HCT116 (cell line): ENCODE measurements at regions of chr22 and their contacts with region 1.

Region 1: DNA sequence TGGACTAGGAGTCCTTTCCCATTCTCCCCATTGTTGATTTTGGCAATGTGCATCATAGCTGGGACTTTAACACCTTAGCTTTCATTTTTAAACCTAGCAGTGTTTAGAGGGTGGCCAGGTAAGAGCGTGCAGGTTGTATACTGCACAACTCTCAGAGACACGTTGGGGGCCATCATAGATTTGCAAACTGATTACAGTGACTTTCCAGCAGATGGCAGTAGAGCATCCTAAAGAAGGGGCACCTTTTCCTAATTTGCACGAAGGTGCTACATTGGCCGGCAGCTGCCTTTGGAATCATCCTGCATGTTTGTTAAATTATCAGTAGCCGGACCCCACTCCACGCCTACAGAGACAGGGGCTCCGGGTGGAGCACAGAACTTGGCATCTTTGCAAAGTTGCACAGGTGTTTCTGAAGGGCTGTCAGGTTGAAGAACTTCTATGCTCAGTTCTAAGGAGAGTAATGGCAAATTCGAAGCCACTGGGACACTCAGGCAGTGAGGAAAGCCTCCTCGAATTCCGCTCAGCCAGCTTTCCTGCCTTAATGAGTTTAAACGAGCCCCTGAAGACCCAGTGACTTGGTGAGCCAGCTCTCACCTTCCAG is 7.7 kb downstream of the LHFPL7 start:
- DNase-seq: no peak
- ATAC-seq: peak; percentile 87
- H3K4me3 ChIP-seq: no peak overlapping the region
- H3K27ac ChIP-seq: no peak overlapping the region
- H3K4me1 ChIP-seq: no peaks in the 10 kb centered on the region; a peak in 1 of 4 replicates
- H3K27me3 ChIP-seq: no peaks in the 10 kb centered on the region
- CTCF ChIP-seq: peak; percentile 65 to 78 (median 76); a peak in 5 of 6 replicates
- POLR2A ChIP-seq: no peak
- RAD21 ChIP-seq: peak; percentile 80

Region 2: GRCh38 chr22:24926849-24927579 is 11.8 kb before region 1 on chr22:
- CTCF ChIA-PET with region 1: interaction called, 11 read pairs
- POLR2A ChIA-PET with region 1: no interaction called
- RAD21 ChIA-PET with region 1: interaction called in 1 of 2 experiments, 3 read pairs
- intact Hi-C with region 1: no loop called
- DNase-seq: no peak
- ATAC-seq: peak; percentile 78
- H3K4me3 ChIP-seq: no peak overlapping the region
- H3K27ac ChIP-seq: no peak overlapping the region
- H3K4me1 ChIP-seq: peaks cover 7 to 11% of the 10 kb centered on the region in 2 experiments
- H3K27me3 ChIP-seq: peaks cover 17% of the 10 kb centered on the region
- CTCF ChIP-seq: no peak
- POLR2A ChIP-seq: no peak
- RAD21 ChIP-seq: no peak

Region 3: DNA sequence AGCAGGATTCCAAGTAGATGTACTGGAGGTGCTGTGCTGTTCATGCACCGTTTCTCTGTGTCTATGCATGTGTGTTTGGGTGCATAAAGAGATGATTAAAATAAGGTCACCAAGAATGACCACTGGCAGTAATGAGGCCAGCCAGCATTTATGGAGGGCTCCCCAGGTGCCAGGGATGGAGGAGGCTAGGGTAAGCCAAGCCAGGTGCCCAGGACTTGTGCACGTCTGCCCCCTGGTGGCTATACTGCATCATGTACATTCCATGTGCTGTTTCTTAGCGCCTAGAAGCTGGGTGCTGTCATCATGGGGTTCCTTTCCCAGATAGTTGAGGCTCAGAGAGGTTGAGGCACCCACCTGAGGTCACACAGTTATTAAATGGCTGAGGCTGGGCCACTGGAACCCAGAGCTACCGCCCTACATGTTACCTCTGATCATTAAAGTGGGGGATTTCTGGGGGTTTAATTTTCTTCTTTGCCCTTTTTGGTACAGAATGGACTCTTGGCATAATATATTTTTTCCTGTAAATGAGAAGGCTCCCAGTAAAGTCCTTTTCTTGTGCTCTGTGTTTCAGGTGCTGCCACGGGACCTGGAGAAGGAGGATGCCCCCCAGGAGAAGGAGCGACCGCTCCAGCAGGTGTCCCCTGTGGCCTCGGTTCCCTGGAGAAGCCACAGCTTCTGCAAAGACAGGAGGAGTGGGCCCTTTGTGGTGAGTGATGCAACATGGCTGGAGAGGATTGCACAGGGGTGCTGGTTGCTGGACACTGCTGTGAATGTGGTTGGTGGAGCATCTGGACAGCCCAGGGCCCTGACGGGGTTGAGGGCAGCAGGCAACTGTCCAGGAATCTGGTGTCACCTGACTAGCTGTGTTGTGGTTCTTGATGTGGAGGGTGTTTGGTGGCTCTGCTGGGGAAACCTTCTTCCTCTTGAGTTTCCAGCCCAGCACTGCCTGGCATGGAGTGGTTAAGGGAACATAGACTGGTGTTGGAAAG is 110.1 kb after region 1 on chr22:
- CTCF ChIA-PET with region 1: interaction called, 44 read pairs
- POLR2A ChIA-PET with region 1: no interaction called
- RAD21 ChIA-PET with region 1: interaction called, 4 to 6 read pairs
- intact Hi-C with region 1: loop called (anchors 1 kb)
- DNase-seq: peak; percentile 46
- ATAC-seq: peak; percentile 95
- H3K4me3 ChIP-seq: no peak overlapping the region
- H3K27ac ChIP-seq: no peak overlapping the region
- H3K4me1 ChIP-seq: peaks cover 0 to 17% of the 10 kb centered on the region in 2 experiments; a peak in 2 of 4 replicates
- H3K27me3 ChIP-seq: no peaks in the 10 kb centered on the region
- CTCF ChIP-seq: peak; percentile 80 to 90 (median 88)
- POLR2A ChIP-seq: no peak
- RAD21 ChIP-seq: peak; percentile 95

Region 4: GRCh38 chr22:25057013-25057881 is 118.4 kb after region 1 on chr22:
- CTCF ChIA-PET with region 1: interaction called, 28 read pairs
- POLR2A ChIA-PET with region 1: no interaction called
- RAD21 ChIA-PET with region 1: no interaction called
- intact Hi-C with region 1: loop called (anchors 1 kb)
- DNase-seq: peak; percentile 29
- ATAC-seq: peak; percentile 96
- H3K4me3 ChIP-seq: no peak overlapping the region
- H3K27ac ChIP-seq: no peak overlapping the region
- H3K4me1 ChIP-seq: peaks cover 2 to 30% of the 10 kb centered on the region in 2 experiments; a peak in 3 of 4 replicates
- H3K27me3 ChIP-seq: no peaks in the 10 kb centered on the region
- CTCF ChIP-seq: peak; percentile 65 to 97 (median 88); a peak in 5 of 6 replicates
- POLR2A ChIP-seq: no peak
- RAD21 ChIP-seq: peak; percentile 74